ENCODE measurements at regions of chr2 and their contacts with region 1.

Region 1: DNA sequence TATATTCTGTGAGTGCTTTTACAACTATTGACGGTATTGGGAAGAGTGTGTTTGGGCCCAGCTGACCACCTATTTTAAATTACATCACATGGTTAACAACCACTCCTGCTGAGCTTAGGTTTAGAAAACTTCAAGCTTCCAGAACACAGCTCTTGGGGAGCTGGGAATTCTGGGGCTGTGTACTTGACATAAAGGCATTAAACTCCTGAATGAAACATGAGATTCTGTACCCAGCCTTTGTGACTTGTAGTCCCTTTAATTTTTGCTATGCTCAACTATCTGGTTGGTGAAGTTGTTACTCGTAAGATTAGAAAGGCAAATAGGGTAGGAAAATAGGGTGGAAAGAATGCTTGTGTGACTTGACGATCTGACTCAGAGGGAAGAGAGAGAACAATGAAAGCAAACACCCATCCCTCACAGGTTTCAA is 66.9 kb downstream of the LTBP1 start:
- DNase-seq: no peak
- ATAC-seq: no peak
- H3K4me3 ChIP-seq: no peak overlapping the region
- H3K27ac ChIP-seq: no peak overlapping the region
- H3K4me1 ChIP-seq: peaks cover 0 to 33% of the 10 kb centered on the region in 2 experiments; a peak in 2 of 4 replicates
- H3K27me3 ChIP-seq: no peaks in the 10 kb centered on the region
- CTCF ChIP-seq: no peak
- POLR2A ChIP-seq: no peak
- RAD21 ChIP-seq: no peak

Region 2: GRCh38 chr2:32553829-32554432 is 459.8 kb before region 1 on chr2:
- CTCF ChIA-PET with region 1: no interaction called
- POLR2A ChIA-PET with region 1: no interaction called
- RAD21 ChIA-PET with region 1: no interaction called
- intact Hi-C with region 1: loop called (anchors 5 kb)
- DNase-seq: peak; percentile 12
- ATAC-seq: peak; percentile 88
- H3K4me3 ChIP-seq: no peak overlapping the region
- H3K27ac ChIP-seq: no peak overlapping the region
- H3K4me1 ChIP-seq: no peaks in the 10 kb centered on the region
- H3K27me3 ChIP-seq: no peaks in the 10 kb centered on the region
- CTCF ChIP-seq: peak; percentile 54 to 77 (median 74); a peak in 5 of 6 replicates
- POLR2A ChIP-seq: no peak
- RAD21 ChIP-seq: peak; percentile 66

Region 3: GRCh38 chr2:32752205-32752604 is 261.5 kb before region 1 on chr2:
- CTCF ChIA-PET with region 1: no interaction called
- POLR2A ChIA-PET with region 1: no interaction called
- RAD21 ChIA-PET with region 1: no interaction called
- intact Hi-C with region 1: no loop called
- DNase-seq: no peak
- ATAC-seq: no peak
- H3K4me3 ChIP-seq: no peak overlapping the region
- H3K27ac ChIP-seq: no peak overlapping the region
- H3K4me1 ChIP-seq: no peaks in the 10 kb centered on the region
- H3K27me3 ChIP-seq: no peaks in the 10 kb centered on the region
- CTCF ChIP-seq: no peak
- POLR2A ChIP-seq: no peak
- RAD21 ChIP-seq: no peak

Measured in HCT116 (cell line).